ENCODE measurements at regions of chr17 and their contacts with region 1.

Region 1: GRCh38 chr17:75996665-75997590 is 3.7 kb upstream of the CDK3 start:
- DNase-seq: peak; percentile 73
- H3K4me3 Mint-ChIP-seq: peak overlapping the region; percentile 62
- H3K27ac Mint-ChIP-seq: peak overlapping the region; percentile 90
- H3K4me1 Mint-ChIP-seq: peaks cover 33% of the 10 kb centered on the region
- H3K27me3 Mint-ChIP-seq: no peaks in the 10 kb centered on the region
- CTCF ChIP-seq: no peak

Region 2: DNA sequence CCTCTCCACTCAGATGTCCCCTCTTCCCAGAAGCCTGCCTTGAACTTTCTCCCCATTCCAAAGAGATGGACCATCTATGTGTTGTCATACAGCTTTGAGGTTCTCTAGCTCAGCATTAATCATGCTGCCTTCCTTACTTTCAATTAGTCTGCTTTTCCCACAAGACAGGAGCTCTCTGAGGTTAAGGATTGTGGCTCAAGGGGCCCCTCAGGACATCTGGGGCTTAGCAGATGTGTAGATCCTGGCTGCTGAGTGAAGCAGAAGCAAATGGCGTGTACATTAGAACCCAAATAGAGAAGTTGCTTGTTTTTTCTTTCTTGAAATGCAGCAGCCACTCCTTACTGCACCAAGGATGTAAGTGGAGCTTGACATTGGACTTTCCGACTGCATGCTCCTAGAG is 1631.1 kb after region 1 on chr17:
- CTCF ChIA-PET with region 1: interaction called, 10 read pairs
- intact Hi-C with region 1: no loop called
- DNase-seq: no peak
- H3K4me3 Mint-ChIP-seq: no peak overlapping the region
- H3K27ac Mint-ChIP-seq: no peak overlapping the region
- H3K4me1 Mint-ChIP-seq: no peaks in the 10 kb centered on the region
- H3K27me3 Mint-ChIP-seq: peaks cover 48% of the 10 kb centered on the region
- CTCF ChIP-seq: no peak